ENCODE measurements at regions of chr6 and their contacts with region 1.

Region 1: DNA sequence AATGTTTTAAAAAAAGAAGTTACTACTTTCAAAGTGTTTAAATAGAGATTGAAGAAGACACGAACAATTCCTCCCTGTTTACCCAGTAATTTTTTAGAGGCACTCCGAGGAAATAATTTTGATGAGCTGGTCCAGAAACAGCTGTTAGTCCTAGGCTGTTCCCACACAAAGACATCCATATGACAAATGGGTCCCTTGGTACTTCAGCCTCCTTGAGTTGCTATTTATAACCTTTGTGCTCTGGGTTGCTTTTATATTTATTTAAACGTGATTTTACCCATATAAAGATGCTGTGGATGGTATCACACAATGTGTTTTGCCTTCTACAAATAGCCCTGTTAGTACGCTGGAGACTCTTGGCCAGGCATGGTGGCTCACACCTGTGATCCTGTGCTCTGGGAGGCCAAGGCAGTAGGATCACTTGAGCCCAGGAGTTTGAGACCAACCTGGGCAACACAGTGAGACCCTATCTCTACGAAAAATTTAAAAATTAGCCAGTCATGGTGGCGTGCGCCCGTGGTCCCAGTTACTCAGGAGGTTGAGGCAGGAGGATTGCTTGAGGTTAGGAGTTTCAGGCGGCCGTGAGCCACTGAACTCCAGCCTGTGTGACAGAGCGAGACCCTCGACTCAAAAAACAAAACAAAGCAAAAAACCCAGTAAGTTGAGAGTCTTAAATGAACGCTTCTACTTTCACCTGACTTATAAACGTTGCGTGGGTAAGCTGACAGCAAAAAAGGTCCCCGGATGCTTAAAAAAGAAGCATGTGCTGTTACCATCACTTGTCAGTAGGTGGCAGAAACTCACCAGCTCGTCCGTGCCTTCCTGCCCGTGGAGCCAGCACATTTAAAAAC is 56.9 kb upstream of the ARMH2 start:
- DNase-seq: peak; percentile 48 to 92
- ATAC-seq: peak; percentile 77 to 84 (median 83)
- H3K4me3 ChIP-seq: no peak overlapping the region
- H3K4me3 Mint-ChIP-seq: peak overlapping the region; percentile 49
- H3K27ac ChIP-seq: peak overlapping the region; percentile 45
- H3K27ac Mint-ChIP-seq: peak overlapping the region; percentile 93 to 95
- H3K4me1 ChIP-seq: peaks cover 45% of the 10 kb centered on the region
- H3K4me1 Mint-ChIP-seq: peaks cover 50 to 59% of the 10 kb centered on the region in 2 donors
- H3K27me3 ChIP-seq: no peaks in the 10 kb centered on the region
- H3K27me3 Mint-ChIP-seq: no peaks in the 10 kb centered on the region
- CTCF ChIP-seq: peak; percentile 84

Region 2: GRCh38 chr6:24766680-24767462 is 88.7 kb before region 1 on chr6:
- intact Hi-C with region 1: no loop called
- DNase-seq: peak in 1 of 2 donors; percentile 57
- ATAC-seq: peak; percentile 48 to 69 (median 66)
- H3K4me3 ChIP-seq: no peak overlapping the region
- H3K4me3 Mint-ChIP-seq: no peak overlapping the region
- H3K27ac ChIP-seq: no peak overlapping the region
- H3K27ac Mint-ChIP-seq: no peak overlapping the region
- H3K4me1 ChIP-seq: no peaks in the 10 kb centered on the region
- H3K4me1 Mint-ChIP-seq: no peaks in the 10 kb centered on the region
- H3K27me3 ChIP-seq: no peaks in the 10 kb centered on the region
- H3K27me3 Mint-ChIP-seq: no peaks in the 10 kb centered on the region
- CTCF ChIP-seq: peak; percentile 36

Region 3: DNA sequence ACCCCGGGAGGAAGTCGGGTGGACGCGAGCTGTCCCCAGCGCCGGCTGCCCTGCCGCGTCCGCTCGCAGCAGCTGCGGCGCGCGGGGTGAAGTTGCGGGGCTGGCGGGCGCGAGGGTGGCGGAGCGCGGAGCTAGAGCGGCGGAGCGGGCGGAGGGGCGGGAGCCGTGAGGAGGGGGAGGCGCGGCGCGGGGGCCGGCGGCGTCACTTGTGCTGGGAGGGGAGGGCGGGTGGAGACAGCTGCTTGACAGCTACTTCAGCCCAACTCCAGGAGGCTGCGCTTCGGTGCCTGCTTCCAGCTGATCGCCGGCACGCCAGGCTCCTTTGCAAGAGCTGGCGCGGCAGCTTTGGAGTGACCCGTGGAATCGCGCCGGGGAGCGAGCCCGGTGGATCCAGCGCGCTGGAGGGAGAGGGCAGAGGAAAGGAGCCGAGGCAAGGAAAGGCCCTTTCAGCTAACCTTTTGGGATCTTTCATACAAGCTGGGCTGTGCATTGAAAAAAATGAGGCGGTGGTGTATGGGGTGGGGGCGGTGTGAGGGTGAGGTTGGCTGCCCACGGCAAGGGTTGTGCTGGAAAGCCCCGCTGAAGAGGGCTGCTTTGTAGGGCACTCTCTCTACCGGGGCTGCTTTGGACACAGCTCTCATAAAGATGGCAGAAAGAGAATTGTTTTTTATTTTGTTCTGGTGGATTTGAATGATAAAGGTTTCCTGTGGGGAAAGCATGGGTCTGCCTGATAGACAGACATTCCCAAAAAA is 55.5 kb after region 1 on chr6:
- intact Hi-C with region 1: loop called (anchors 5 kb)
- DNase-seq: peak; percentile 55 to 74
- ATAC-seq: peak; percentile 63 to 74 (median 74)
- H3K4me3 ChIP-seq: peak overlapping the region; percentile 43
- H3K4me3 Mint-ChIP-seq: peak overlapping the region; percentile 88
- H3K27ac ChIP-seq: peak overlapping the region; percentile 82
- H3K27ac Mint-ChIP-seq: peak overlapping the region; percentile 89 to 93
- H3K4me1 ChIP-seq: peaks cover 81% of the 10 kb centered on the region
- H3K4me1 Mint-ChIP-seq: peaks cover 96 to 98% of the 10 kb centered on the region in 2 donors
- H3K27me3 ChIP-seq: no peaks in the 10 kb centered on the region
- H3K27me3 Mint-ChIP-seq: no peaks in the 10 kb centered on the region
- CTCF ChIP-seq: no peak

Region 4: GRCh38 chr6:25017932-25018567 is 162.4 kb after region 1 on chr6:
- intact Hi-C with region 1: loop called (anchors 1 kb)
- DNase-seq: peak; percentile 69 to 92
- ATAC-seq: peak; percentile 94 to 97 (median 97)
- H3K4me3 ChIP-seq: no peak overlapping the region
- H3K4me3 Mint-ChIP-seq: no peak overlapping the region
- H3K27ac ChIP-seq: no peak overlapping the region
- H3K27ac Mint-ChIP-seq: peak overlapping the region; percentile 76 to 84
- H3K4me1 ChIP-seq: peaks cover 9% of the 10 kb centered on the region
- H3K4me1 Mint-ChIP-seq: peaks cover 23 to 30% of the 10 kb centered on the region in 2 donors
- H3K27me3 ChIP-seq: no peaks in the 10 kb centered on the region
- H3K27me3 Mint-ChIP-seq: no peaks in the 10 kb centered on the region
- CTCF ChIP-seq: peak; percentile 88